ENCODE measurements at regions of chr3 and their contacts with region 1.

Region 1: DNA sequence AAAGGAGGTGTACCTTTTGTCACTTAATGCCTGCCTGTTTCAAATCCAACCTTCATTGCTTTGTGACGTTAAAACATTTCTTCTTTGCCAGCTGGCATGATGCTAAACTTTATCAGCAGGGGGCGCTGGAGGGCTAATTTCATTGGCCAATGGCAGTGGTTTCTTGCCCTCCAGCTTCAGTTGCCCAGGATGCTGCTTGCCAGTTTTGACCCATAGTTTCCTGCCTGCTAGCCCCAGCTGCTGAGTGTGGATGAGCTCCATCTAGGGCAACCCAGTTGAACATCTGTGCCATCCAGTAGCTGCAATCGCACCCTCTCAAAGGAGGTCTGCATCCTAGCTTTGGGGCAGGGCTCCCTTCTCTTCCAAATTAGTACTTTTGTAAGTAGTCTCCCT is 22.1 kb downstream of the ACKR2 start:
- DNase-seq: peak; percentile 69

Region 2: DNA sequence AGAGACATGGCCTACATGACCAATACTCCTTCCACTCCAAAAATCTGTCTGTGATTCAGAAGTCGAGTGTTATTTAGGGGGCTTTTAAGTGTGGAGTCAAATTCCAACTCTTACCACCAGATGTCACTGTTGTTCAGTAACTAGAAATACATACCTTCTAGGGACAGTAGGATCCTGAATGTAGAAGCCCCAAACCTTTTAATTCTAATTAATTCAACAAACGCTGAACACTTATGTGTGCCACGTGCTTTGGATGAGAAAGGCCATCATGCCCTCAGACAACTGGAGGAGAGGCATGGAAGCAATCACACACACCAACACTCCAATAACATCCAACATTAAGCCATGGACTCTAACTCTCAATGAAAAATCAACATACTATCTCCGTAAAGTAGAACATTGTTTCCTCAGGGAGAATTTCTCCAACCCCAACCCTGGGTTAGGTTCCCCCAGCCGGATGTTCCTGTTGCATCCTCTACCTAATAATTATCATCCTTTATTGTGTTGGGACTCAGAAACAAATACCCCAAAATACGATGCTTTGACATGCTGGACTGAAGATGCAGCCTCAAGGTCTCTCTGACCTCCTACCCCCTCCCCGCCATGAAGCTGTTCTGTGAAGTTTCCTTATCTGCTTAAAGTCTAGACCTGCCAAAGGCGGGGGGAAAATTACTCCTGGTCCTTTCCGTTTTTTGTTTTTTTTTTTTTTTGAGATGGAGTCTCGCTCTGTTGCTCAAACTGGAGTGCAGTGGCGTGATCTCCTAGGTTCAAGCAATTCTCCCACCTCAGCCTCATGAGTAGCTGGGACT is 50.2 kb before region 1 on chr3:
- CTCF ChIA-PET with region 1: interaction called, 24 read pairs
- POLR2A ChIA-PET with region 1: no interaction called
- DNase-seq: peak; percentile 65

Region 3: GRCh38 chr3:42880601-42881451 is 49.5 kb after region 1 on chr3:
- CTCF ChIA-PET with region 1: interaction called, 10 read pairs
- POLR2A ChIA-PET with region 1: no interaction called
- DNase-seq: peak; percentile 92

Measured in HEK293T (cell line).